ENCODE measurements at regions of chrX and their contacts with region 1.

Region 1: DNA sequence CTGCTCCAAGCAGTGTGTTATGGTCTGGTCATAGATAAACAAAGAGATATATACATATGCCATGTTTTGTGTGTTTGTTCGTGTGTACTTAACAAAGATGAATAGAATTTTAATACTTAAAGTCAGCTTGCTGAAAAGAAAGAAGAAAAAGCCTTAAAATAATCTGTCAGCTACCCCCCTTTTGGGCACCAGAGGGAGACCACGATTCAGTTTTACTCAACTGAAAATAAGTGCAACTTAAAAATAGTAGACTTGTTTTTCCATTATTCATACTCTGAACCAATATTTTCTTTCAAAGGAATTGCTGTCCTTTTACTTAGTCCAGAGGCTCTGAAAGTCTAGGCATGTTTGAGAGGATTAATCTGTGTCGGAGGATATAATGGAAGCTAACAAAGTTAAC is 181.7 kb upstream of the AGTR2 start:
- DNase-seq: no peak
- CTCF ChIP-seq: peak; percentile 25

Region 2: DNA sequence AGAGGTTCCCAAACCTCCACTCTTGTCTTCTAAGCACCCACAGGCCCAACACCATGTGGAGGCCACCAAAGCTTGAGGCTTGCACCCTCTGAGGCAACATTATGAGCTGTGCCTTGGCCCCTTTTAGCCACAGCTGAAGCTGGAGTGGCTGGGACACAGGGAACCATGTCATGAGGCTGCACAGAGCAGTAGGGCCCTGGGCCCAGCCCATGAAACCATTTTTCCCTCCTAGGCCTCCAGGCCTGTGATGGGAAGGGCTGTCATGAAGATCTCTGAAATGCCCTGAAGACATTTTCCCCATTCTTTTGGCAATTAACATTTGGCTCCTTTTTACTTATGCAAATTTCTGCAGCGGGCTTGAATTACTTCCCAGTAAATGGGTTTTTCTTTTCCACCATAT is 784.8 kb before region 1 on chrX:
- in situ Hi-C with region 1: no loop called
- DNase-seq: no peak
- CTCF ChIP-seq: no peak

Region 3: DNA sequence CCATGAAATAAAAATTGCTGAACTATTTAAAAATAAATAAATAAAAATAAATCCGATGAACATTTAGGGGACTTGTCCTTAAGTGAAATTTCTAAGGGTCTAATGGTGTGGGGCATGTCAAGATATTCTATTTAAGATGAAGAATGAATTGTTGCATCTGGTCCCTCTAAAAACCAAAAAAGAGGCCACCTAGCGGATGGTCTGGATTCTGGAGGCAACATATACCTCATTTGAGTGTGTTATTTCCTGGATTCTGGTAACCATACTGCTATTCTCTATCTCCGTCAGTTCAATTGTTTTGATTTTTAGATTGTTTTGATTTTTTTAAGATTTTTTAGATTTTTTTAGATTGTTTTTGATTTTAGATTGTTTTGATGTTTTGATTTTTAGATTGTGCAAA is 210.0 kb after region 1 on chrX:
- in situ Hi-C with region 1: loop called (anchors 25 kb)
- DNase-seq: no peak
- CTCF ChIP-seq: no peak

Measured in GM13976 (cell line).